ENCODE measurements at regions of chr2 and their contacts with region 1.

Region 1: GRCh38 chr2:143259368-143259958 is 130.2 kb downstream of the ARHGAP15 start:
- DNase-seq: peak; percentile 13
- CTCF ChIP-seq: peak; percentile 67

Region 2: GRCh38 chr2:143071185-143071876 is 188.1 kb before region 1 on chr2:
- CTCF ChIA-PET with region 1: no interaction called
- POLR2A ChIA-PET with region 1: no interaction called
- DNase-seq: no peak
- CTCF ChIP-seq: no peak

Region 3: DNA sequence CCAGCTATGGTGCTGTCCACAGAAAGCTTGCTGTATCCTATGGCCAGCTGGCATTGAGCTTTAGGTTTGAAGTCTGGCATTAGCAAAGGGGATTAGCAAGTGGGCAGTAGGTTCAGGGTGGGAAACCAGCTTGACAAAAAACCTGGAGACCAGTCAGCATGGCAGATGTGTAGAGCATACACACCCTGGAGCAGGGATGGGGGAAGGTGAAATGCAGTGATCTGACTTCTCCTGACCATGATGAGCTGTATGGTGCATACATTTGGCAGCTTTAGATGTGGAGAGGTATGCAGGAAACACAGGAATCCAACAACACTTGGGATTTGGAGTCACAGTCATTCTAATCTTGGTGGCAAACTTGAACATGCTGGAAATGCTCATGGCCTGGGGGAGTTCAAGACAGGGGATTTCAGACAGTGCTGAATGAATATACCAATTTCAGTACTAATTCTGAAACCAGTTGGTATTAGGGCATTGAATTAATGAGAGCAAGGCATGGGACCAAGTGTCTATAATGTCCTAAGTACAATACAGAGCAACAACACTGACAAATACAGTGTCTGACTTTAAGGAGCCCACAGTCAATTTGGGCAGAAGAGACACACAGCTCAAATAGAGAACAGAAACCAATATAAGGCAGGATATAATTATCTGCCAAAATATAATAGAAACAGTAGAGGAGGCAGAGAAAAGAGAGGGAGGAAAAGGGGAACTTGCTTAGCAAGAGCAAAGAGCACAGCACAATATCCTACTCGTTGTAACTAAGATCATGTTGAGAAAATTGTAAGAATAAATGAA is 118.4 kb before region 1 on chr2:
- CTCF ChIA-PET with region 1: interaction called, 19 read pairs
- POLR2A ChIA-PET with region 1: no interaction called
- DNase-seq: no peak
- CTCF ChIP-seq: no peak

Region 4: DNA sequence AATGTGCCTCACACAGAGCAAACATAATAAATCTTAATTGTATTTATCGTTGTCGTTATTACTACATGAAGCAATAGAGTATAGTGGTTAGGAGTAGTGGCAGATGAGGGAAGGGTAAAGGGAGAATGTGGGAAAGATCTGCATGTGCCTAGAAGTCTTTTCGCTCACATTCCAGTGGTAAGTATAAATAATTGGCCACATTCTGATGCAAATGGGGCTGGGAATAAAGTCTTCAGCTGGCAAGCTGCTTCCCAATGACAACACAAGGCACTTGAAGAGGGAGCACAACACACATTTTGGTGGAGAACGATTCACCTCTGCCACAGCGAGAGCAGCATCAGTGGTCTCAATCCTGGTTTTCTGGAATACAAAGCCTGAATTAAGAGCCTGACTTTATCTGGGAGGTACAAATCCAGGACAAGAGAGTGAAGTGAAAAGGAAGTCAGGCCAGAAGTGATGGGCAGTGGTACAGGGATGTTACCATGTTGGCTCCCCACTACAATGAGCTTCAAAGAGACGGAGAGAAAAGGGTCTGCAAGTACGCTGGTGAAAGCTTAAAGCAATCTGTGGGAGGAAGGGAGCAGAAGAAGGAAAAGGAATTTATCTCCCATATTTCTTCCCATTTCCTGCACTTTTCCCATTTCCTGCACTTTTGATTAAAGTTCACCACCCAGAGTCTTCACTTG is 17.9 kb before region 1 on chr2:
- CTCF ChIA-PET with region 1: interaction called, 14 read pairs
- POLR2A ChIA-PET with region 1: no interaction called
- DNase-seq: no peak
- CTCF ChIP-seq: no peak

Region 5: DNA sequence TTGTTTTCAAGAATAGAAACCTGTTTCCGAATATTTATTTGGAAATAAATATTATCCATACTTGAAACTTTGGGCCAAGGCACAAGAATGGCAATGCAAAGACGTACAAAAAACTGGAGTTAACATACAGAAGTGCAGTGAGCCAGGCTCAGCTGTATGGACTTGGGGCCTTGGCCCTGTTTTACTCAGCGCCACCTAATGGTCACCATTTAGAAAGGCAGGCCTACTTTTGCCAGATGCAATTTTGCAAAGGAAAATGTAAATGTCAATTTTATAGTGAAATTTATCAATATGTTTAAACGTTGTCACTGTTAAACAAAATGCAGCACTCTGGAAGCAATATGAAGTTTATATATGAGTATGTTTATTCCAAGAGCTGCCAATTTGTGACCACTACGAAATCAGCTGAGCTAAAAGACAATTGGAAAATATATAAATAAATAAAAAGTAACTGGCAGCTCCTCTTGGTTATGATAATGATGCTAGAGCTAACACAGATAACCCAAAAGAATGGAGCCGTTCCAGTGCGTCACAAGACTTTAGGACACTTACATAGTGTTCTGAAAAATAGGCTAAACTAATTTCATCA is 24.7 kb after region 1 on chr2:
- CTCF ChIA-PET with region 1: interaction called, 11 read pairs
- POLR2A ChIA-PET with region 1: no interaction called
- DNase-seq: peak; percentile 5
- CTCF ChIP-seq: peak; percentile 56

Region 6: GRCh38 chr2:143705108-143705686 is 445.7 kb after region 1 on chr2:
- CTCF ChIA-PET with region 1: no interaction called
- POLR2A ChIA-PET with region 1: no interaction called
- DNase-seq: no peak
- CTCF ChIP-seq: no peak